A549 (cell line): ENCODE measurements at regions of chr12 and their contacts with region 1.

Region 1: DNA sequence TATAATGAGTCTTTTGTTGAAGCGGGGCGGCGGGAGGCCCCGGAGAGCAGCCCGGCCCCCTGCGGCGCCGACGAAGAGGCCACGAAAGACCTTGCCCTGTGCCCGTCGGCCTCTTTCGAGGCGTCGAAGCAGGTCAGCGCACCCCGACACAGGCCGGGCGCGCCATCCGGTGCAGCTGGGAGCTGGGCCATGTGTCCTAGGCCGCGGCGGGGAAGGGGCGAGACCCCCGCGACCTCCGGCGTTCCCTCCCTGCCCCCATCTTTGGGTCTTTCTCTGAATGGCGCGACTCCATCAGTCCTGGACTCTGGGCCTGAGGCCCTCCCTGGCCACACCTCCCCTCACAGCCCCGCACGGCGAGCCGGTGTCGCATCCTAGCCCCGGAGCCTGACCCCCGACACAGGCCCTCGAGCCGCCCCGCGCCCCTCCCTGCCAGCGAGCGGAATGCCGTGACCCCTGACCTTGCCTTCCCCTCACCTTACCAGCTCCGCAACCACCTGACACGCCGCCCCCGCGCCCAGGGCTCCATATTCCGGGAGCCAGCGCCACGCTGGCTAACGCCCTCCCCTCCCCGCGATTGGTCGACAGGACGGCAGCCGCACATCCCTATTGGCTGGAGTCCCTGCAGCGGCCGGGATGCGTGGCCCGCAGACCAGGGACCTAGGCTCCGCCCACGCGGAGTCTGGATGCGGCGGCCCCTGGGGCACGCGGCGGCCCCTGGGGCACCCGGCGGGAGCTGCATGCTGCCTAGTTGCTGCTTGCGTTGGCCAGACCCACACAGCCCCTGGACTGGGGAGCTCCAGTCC is at the start of gene SLC11A2:
- DNase-seq: peak; percentile 96 to 98
- ATAC-seq: peak; percentile 96 to 98
- H3K4me3 ChIP-seq: peak within 1 kb of the TSS; percentile 64
- H3K27ac ChIP-seq: peak within 1 kb of the TSS; percentile 84 to 93
- H3K4me1 ChIP-seq: peaks cover 36% of the 10 kb centered on the region
- CTCF ChIP-seq: no peak
- EP300 ChIP-seq: no peak
- POLR2A ChIP-seq: peak; percentile 92
- RAD21 ChIP-seq: no peak
- polyA plus RNA-seq, gene SLC11A2: 80.7 and 82.6 TPM in 2 replicates

Region 2: DNA sequence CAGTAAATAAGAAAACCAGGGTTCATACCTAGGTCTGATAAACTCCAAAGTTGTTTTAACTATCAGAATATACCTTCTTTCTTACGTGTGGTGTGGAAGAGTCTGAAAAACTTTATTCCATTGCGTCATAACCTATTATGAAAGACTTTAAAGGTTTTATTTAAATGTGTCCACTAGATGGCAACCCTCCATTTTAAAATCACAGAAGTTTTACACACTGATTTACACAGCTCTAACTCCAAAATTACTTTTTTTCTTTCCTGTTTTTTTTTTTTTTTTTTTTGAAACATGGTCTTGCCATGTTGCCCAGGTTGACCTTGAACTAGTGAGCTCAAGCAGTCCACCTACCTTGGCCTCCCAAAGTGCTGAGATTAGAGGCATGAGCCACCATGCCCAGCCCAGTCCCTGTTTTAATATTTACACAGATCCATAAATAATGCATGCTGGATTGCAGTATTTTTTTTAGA is 200.6 kb before region 1 on chr12:
- CTCF ChIA-PET with region 1: interaction called, 14 read pairs
- POLR2A ChIA-PET with region 1: interaction called, 3 read pairs
- DNase-seq: peak; percentile 25 to 72
- ATAC-seq: peak; percentile 72 to 75
- H3K4me3 ChIP-seq: no peak overlapping the region
- H3K27ac ChIP-seq: peak overlapping the region; percentile 2 to 59; a peak in 4 of 6 replicates
- H3K4me1 ChIP-seq: peaks cover 9% of the 10 kb centered on the region
- CTCF ChIP-seq: peak; percentile 85
- EP300 ChIP-seq: no peak
- POLR2A ChIP-seq: no peak
- RAD21 ChIP-seq: peak; percentile 74 to 76

Region 3: DNA sequence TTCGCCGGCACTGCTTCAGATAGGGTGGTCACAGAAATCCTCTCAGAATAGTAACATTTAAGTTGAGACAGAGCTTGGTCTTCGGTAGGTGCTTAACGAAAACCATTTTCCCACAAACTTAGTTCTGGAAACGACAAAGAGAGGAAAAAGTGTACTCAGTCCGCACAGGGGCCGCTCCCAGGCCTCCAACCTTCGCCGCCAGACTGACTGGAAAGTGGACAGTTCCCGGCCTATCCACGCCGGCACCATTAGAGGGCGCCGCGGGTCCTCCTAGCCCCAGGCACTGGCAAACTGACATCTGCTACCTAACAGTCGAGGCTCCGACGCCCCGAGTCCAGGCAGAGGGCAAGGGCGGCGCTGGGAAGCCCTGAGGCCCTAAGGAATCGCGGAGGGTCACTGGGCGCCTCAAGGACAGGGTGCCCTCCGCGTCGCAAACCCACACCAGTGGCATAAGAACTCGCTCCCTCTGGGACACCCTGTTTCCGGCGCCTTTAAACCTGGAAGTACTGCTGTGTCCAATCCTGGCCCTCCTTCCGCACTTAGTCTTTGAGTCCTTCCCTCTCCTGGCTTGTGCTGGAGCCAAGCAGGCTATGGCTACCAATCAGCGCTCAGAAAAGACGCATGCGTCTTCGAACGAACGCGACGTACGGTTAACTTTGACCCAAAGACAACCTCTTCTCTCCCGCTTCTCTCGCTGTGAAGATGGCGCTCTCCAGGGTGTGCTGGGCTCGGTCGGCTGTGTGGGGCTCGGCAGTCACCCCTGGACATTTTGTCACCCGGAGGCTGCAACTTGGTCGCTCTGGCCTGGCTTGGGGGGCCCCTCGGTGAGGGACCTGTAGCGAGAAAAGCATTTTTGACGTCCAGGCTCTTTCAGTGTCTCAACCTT is 21.9 kb after region 1 on chr12 and contains the start of gene LETMD1:
- CTCF ChIA-PET with region 1: interaction called, 15 read pairs
- POLR2A ChIA-PET with region 1: no interaction called
- DNase-seq: peak; percentile 99
- ATAC-seq: peak; percentile 99 to 100
- H3K4me3 ChIP-seq: peak within 1 kb of the TSS; percentile 72
- H3K27ac ChIP-seq: peak within 1 kb of the TSS; percentile 90 to 92
- H3K4me1 ChIP-seq: peaks cover 10% of the 10 kb centered on the region; the same call in 2 of the 3 replicates
- CTCF ChIP-seq: peak; percentile 95
- EP300 ChIP-seq: no peak
- POLR2A ChIP-seq: peak; percentile 69
- RAD21 ChIP-seq: peak; percentile 72 to 73
- polyA plus RNA-seq, gene LETMD1: 72.9 and 83.0 TPM in 2 replicates